ENCODE measurements at regions of chr6 and their contacts with region 1.

Region 1: DNA sequence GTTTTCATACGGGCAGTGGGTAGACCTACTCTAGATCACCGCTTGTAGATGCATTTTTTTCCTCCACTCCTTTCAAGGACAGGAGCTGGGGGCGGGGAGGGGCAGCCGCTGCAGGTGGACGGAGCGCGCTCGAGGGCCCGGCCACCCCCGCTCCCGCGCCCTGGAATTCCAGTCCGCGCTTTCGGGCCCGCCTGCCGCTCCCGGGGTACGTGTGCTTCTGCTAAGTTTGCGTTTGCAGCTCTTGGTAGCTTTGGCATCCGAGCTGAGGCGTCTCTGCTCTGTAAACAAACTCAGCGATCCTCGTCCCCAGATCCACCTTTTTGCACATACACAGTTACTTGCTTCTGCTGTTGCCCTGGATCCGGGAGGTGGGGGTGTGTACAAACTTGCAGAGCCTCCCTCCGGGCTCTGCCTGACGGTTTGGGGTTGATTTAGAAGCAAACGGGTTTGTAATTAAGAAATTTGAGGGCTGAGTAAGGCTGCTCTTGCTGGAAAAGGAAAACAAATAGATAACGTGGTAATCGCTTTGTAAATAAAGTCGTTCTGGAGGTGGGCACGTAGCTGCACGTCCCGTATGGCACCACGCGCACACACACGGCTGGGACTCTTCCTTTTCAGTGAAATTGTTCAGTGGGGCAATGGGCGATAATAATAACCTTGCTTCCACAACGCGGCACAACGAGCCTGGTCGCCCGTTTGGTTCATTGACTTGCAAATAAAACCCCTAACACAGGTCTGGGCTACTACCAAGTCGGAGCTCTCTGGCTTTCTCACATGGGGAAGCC is 976 bp upstream of the CITED2 start:
- DNase-seq: peak; percentile 60
- H3K4me3 ChIP-seq: peak overlapping the region; percentile 90 to 94 (median 92)
- H3K27ac ChIP-seq: peak overlapping the region; percentile 96 to 99 (median 98)
- H3K4me1 ChIP-seq: peaks cover 3 to 38% (median 8%) of the 10 kb centered on the region in 3 donors
- H3K27me3 ChIP-seq: no peaks in the 10 kb centered on the region
- CTCF ChIP-seq: peak in 1 of 6 experiments; percentile 6
- POLR2A ChIP-seq: peak in 1 of 4 donors; percentile 80

Region 2: DNA sequence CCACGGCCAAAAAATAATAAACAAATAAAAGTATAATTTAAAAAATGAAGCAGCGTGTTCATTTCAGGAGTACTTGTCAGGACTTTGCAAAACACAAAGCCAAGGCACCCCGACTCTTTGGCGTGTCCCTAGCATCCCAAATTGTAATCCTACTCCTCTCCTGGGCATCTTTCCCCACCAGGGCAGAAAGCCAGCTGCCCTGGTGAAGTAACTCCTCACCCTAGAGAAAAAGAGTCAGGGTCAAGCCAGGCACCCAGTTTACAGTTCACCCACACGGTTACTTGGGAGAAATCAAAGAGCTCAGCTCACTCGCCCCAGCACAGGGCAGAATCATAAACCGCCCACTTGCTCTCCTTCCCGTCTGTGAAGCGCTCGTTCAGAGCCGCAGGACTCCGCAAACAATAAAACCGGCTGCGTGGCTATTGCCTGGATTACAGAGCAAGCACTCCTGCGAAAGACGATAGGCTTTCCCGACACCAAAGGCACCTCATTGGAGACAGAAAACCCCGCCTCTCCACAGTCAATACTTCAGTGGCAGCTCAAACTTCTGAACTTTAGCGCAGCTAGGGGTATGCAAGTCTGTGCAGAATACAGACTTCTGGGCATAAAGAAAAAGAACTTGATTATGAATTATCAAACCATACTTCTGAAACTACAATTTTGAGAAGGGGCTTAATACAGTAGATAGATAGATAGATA is 803.1 kb before region 1 on chr6:
- intact Hi-C with region 1: no loop called
- DNase-seq: no peak
- H3K4me3 ChIP-seq: peak overlapping the region in 3 of 4 donors; percentile 32 to 58 (median 37)
- H3K27ac ChIP-seq: peak overlapping the region in 1 of 4 donors; percentile 49
- H3K4me1 ChIP-seq: peaks cover 0 to 23% (median 0%) of the 10 kb centered on the region in 3 donors
- H3K27me3 ChIP-seq: no peaks in the 10 kb centered on the region
- CTCF ChIP-seq: no peak
- POLR2A ChIP-seq: no peak

Region 3: GRCh38 chr6:139597771-139598755 is 222.6 kb after region 1 on chr6:
- intact Hi-C with region 1: loop called (anchors 10 kb)
- DNase-seq: no peak
- H3K4me3 ChIP-seq: no peak overlapping the region
- H3K27ac ChIP-seq: peak overlapping the region; percentile 16 to 88 (median 74)
- H3K4me1 ChIP-seq: peaks cover 9 to 39% (median 10%) of the 10 kb centered on the region in 3 donors
- H3K27me3 ChIP-seq: no peaks in the 10 kb centered on the region
- CTCF ChIP-seq: no peak
- POLR2A ChIP-seq: no peak